Activated naive CD4-positive, alpha-beta T cell treated with anti-CD3 and anti-CD28 coated beads for 36 hours (primary cell): ENCODE measurements at regions of chr16 and their contacts with region 1.

Region 1: DNA sequence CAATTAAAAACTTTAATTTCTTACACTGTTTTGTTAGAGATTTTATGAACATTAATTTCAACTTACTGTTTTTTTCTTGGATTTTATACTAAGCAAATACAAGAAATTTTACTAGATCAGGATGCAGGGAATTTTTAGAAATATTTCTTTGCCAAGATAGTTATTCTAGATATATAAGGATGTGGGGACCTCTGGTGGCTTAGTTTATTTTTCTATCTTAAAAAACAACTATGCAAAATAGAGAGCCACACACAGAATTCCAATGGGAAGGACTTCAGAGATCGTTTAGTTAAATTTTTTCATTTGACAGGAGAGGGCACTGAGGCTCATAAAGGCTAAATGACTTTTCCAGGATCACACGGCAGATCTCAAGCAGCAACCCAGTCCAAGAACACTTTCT is 23.0 kb upstream of the CAPNS2 start:
- DNase-seq: no peak
- H3K4me3 Mint-ChIP-seq: no peak overlapping the region
- H3K27ac Mint-ChIP-seq: no peak overlapping the region
- H3K4me1 Mint-ChIP-seq: no peaks in the 10 kb centered on the region
- H3K27me3 Mint-ChIP-seq: no peaks in the 10 kb centered on the region

Region 2: DNA sequence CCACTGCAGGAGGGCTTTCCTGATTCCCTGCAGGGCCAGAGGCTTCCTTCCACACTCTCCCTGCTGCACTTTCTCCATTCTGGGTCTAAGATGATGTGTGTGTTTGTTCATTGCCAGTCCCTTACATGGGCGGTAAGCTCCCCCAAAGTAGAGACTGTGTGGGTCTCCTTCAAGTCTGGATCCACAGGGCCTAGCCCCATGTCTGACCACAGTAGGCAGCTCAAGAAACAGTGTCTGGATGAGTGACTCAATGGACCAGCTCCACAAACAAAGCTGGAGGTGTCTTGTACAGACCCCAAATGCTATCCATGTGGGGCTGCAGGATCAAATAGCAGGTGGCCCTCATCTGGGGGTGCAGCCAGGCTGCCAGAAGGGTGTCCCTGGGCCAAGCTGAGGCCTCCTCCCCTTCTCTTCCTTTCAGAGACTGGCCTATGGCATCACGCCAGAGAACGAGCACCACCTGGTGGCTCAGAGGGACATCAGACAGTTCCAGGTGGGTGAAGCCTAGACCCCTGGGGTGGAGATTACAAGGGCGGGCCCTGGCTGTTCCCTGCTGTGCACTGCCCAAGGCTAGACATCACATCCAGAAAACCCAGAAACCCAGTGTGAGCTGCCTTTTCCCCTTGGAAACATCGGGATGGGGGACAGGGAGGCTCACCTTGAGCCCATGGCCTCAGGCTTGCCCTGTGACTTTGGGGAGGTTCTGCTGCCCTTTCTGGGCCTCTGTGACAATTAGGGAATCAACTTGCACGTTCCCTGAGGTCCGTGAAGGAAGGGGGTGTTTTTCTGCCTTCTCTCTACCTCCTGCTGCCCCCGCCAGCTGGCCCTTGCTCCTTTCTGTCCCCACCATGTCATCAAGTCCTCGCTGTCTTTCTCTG is 158.2 kb after region 1 on chr16:
- CTCF ChIA-PET with region 1: interaction called, 3 read pairs
- intact Hi-C with region 1: loop called (anchors 2 kb)
- DNase-seq: peak; percentile 58
- H3K4me3 Mint-ChIP-seq: no peak overlapping the region
- H3K27ac Mint-ChIP-seq: no peak overlapping the region
- H3K4me1 Mint-ChIP-seq: no peaks in the 10 kb centered on the region
- H3K27me3 Mint-ChIP-seq: peaks cover 2% of the 10 kb centered on the region